ENCODE measurements at regions of chr7 and their contacts with region 1.

Region 1: GRCh38 chr7:41696314-41696916 is 6.5 kb downstream of the INHBA start:
- DNase-seq: peak in 1 of 2 donors; percentile 91
- H3K4me3 ChIP-seq: peak overlapping the region; percentile 44 to 82
- H3K27ac ChIP-seq: peak overlapping the region; percentile 83 to 88
- H3K4me1 ChIP-seq: peaks cover 9 to 34% of the 10 kb centered on the region in 2 donors
- H3K27me3 ChIP-seq: no peaks in the 10 kb centered on the region
- CTCF ChIP-seq: peak; percentile 60 to 75 (median 66)

Region 2: GRCh38 chr7:40232242-40232893 is 1464.0 kb before region 1 on chr7:
- intact Hi-C with region 1: loop called (anchors 10 kb)
- DNase-seq: peak in 1 of 2 donors; percentile 46
- H3K4me3 ChIP-seq: no peak overlapping the region
- H3K27ac ChIP-seq: no peak overlapping the region
- H3K4me1 ChIP-seq: no peaks in the 10 kb centered on the region
- H3K27me3 ChIP-seq: no peaks in the 10 kb centered on the region
- CTCF ChIP-seq: peak; percentile 51 to 67 (median 54)

Region 3: DNA sequence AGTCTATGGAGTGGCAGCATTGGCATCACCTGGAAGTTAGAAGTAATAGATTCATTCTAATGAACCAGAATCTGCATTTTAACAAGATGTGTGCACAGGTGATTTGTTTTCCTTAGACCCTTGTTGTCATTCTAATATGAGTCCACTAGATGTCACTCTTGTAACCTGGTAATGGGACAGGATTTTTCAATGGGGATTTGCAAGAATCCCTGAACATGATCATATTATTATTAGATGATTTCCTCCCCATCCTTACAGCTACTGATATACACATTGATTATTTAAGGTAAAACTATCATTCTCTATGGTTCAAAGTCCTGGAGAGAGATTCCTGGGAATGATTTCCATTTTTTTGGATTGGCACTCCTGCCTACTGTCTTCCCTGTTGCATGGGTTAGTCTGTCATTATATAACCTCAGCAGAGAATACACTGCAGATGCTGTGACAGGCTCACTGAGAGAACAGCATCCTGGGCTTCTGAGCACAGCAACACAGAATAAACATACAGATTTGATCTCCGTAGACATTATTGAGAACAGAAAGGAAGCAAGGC is 1366.7 kb before region 1 on chr7:
- intact Hi-C with region 1: loop called (anchors 2 kb)
- DNase-seq: no peak
- H3K4me3 ChIP-seq: no peak overlapping the region
- H3K27ac ChIP-seq: peak overlapping the region; percentile 2 to 43
- H3K4me1 ChIP-seq: peaks cover 0 to 5% of the 10 kb centered on the region in 2 donors
- H3K27me3 ChIP-seq: no peaks in the 10 kb centered on the region
- CTCF ChIP-seq: peak; percentile 69 to 83 (median 71)

Region 4: GRCh38 chr7:40986351-40986873 is 710.0 kb before region 1 on chr7:
- intact Hi-C with region 1: no loop called
- DNase-seq: no peak
- H3K4me3 ChIP-seq: no peak overlapping the region
- H3K27ac ChIP-seq: peak overlapping the region in 1 of 2 donors; percentile 49
- H3K4me1 ChIP-seq: peaks cover 0 to 10% of the 10 kb centered on the region in 2 donors
- H3K27me3 ChIP-seq: no peaks in the 10 kb centered on the region
- CTCF ChIP-seq: no peak

Region 5: DNA sequence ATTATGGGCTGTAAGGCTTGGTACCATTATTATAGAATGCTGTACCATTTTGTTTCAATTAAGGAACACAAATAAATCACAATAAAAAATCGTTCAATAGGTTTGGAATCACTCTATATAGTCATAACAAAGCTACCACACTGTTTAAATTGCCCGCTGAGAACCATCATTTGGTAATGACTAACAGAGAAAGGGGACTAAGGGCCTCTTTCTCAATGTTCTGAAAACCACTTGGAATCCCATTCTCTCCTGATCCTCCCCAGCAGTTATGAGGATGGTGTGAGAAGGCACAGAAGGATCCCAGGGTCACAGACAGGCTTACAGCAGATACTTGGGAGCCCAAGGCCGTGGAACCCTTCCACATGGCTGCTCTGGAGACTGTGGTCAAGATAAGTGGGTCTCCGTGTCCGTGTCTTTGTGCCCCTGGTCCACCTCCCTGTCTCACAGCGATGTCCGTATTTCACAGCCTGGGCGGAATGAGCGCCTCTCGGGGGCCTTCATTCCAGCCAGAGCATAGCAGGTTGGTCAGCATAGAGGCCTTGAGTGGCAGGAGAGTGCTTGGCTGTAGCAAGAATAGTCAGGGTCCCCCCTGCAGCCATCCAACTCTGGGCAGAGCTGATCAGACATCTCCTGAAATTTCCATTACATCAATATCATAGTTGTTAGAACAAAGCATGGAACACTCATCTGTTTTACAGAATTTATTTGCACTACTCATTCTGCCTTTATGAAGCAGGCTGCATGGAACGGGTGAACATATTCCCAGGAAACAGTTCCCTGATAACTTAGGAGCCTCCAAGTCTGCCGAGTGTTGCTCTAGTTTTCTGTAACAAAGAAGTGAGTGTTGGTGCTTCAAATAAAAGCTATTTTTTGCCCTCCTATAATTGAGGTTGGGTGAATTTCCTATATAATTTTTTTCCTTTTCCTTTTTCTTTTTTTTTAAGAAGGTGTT is 249.0 kb before region 1 on chr7:
- intact Hi-C with region 1: loop called (anchors 2 kb)
- DNase-seq: no peak
- H3K4me3 ChIP-seq: no peak overlapping the region
- H3K27ac ChIP-seq: peak overlapping the region; percentile 66 to 78
- H3K4me1 ChIP-seq: peaks cover 3 to 26% of the 10 kb centered on the region in 2 donors
- H3K27me3 ChIP-seq: no peaks in the 10 kb centered on the region
- CTCF ChIP-seq: no peak

Region 6: GRCh38 chr7:41481353-41481752 is 215.1 kb before region 1 on chr7:
- intact Hi-C with region 1: loop called (anchors 5 kb)
- DNase-seq: no peak
- H3K4me3 ChIP-seq: no peak overlapping the region
- H3K27ac ChIP-seq: no peak overlapping the region
- H3K4me1 ChIP-seq: peaks cover 0 to 20% of the 10 kb centered on the region in 2 donors
- H3K27me3 ChIP-seq: no peaks in the 10 kb centered on the region
- CTCF ChIP-seq: no peak

Region 7: GRCh38 chr7:41573018-41573417 is 123.4 kb before region 1 on chr7:
- intact Hi-C with region 1: loop called (anchors 5 kb)
- DNase-seq: no peak
- H3K4me3 ChIP-seq: no peak overlapping the region
- H3K27ac ChIP-seq: no peak overlapping the region
- H3K4me1 ChIP-seq: peaks cover 0 to 13% of the 10 kb centered on the region in 2 donors
- H3K27me3 ChIP-seq: no peaks in the 10 kb centered on the region
- CTCF ChIP-seq: no peak

Region 8: DNA sequence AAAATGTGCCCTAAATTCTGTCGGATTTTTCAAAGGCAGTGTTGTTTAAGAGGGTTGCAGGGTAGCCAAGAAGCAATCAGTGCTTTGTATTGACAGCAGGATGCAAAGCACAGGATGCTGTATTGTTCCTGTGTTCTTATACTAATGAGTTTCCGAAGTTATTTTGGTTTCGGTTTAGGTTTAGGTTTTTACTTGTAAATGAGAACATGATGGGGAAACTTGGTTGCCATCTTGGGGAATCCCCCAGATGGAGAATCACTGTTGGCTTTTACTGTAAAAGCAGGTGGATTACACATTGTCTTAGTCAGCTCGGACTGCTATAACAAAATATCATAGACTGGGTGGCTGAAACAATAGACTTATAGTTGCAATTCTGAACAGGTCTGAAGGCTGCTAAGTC is 65.7 kb before region 1 on chr7:
- intact Hi-C with region 1: no loop called
- DNase-seq: no peak
- H3K4me3 ChIP-seq: no peak overlapping the region
- H3K27ac ChIP-seq: no peak overlapping the region
- H3K4me1 ChIP-seq: no peaks in the 10 kb centered on the region
- H3K27me3 ChIP-seq: no peaks in the 10 kb centered on the region
- CTCF ChIP-seq: no peak

Measured in ascending aorta (tissue), 2 donors.